Activated naive CD4-positive, alpha-beta T cell treated with anti-CD3 and anti-CD28 coated beads for 36 hours (primary cell): ENCODE measurements at regions of chr7 and their contacts with region 1.

Region 1: DNA sequence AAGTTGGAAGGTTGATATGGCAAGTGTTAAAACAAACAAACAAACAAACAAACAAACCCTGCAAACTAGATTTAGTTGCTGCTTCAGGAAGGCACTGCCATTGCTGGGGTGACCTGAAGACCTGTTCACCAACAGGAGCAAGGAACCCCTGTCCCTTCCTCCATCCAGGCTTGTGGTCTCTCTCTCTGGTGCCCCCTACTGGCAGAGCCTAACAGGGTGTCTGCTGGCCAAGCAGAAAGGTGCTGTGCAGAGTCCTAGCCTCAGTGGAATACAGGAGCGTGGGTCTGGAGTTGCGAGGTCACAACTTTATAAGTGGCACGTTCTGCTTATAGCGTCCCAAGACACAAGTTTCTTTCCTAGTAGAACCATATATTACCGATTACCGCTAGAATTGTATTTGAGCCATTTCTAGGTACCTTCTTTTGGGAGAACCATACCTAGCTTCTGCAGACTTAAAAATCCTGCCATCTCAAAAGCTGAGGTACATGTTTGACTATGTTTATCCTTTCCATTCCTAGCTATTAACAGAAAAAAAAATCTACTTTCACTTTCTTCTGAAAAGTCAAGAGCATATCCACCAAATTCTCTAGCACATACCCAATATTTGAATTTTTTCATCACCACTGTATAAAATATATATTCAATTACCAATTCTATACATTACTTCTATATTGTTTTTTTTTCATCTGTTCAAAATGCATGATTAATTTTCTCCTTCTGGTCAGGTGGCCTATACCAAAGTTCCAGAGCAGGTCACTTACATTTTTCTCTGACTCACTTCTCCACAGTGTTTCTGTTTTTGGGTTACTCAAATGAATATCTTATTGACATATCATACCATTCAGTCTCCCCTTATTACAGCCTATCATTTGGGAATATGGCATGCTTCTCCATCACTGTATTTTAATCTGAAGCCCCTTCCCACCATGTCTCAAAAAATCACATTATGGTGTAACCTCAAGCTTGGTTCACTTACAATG is 29.1 kb upstream of the CALD1 start:
- DNase-seq: peak; percentile 86
- H3K4me3 Mint-ChIP-seq: no peak overlapping the region
- H3K27ac Mint-ChIP-seq: no peak overlapping the region
- H3K4me1 Mint-ChIP-seq: peaks cover 3% of the 10 kb centered on the region
- H3K27me3 Mint-ChIP-seq: no peaks in the 10 kb centered on the region

Region 2: DNA sequence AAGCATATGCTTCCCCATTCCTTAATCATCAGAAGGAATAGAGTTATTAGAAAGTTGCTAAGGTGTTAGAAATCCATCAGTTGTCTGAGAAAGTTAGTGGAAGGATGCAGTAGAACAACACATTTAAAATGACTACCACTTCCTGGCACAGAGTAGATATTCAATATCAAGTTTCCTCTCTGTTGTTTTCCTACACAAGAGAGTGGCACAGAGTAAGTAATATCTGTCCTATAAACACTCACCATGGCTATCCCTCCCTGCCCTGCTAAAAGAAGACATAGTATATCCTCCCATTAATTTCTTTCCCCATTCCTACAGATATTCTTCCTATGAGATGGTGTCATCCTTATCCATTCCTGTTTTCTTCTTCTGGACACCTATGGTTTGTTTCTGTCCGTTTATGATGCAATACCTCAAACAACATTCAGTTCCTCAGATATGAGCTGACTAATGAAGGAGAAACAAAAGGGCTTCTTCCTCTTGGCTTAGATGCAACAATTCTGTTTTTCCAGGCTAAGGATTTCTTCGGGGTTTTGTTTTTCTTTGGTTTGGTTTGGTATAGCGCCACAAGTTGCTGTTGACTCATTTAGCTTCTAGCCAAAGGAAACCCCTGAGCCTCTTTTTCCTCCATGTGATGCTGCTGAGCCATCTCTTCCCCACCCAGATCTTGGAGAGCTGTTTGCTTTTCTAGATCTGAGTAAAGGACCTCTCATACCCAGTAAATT is 136.6 kb before region 1 on chr7:
- CTCF ChIA-PET with region 1: interaction called, 5 read pairs
- intact Hi-C with region 1: loop called (anchors 5 kb)
- DNase-seq: peak; percentile 45
- H3K4me3 Mint-ChIP-seq: no peak overlapping the region
- H3K27ac Mint-ChIP-seq: no peak overlapping the region
- H3K4me1 Mint-ChIP-seq: peaks cover 9% of the 10 kb centered on the region
- H3K27me3 Mint-ChIP-seq: peaks cover 17% of the 10 kb centered on the region

Region 3: GRCh38 chr7:134690016-134690415 is 60.4 kb before region 1 on chr7:
- CTCF ChIA-PET with region 1: interaction called, 18 read pairs
- intact Hi-C with region 1: loop called (anchors 1 kb)
- DNase-seq: peak; percentile 13
- H3K4me3 Mint-ChIP-seq: no peak overlapping the region
- H3K27ac Mint-ChIP-seq: no peak overlapping the region
- H3K4me1 Mint-ChIP-seq: peaks cover 14% of the 10 kb centered on the region
- H3K27me3 Mint-ChIP-seq: no peaks in the 10 kb centered on the region

Region 4: DNA sequence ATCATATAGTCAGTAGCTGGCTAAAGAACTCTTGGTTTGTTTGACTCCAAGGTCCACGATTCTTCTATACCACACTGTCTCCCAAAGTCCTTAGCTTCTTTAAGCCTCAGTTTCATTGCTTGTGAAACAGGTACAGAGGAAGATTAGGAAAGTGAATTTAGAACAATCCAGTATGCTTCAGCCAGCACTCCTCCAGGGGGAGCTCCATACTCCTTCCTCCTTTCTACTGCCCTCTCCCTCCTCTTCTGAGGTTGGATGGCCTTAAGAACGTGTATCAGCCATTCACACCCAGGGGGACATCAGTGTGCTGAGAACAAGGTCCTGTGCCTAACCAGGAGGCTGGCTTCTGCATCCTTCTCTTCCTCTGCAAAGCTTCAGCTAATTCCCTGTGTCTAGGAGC is 25.8 kb before region 1 on chr7:
- CTCF ChIA-PET with region 1: interaction called, 4 read pairs
- intact Hi-C with region 1: loop called (anchors 2 kb)
- DNase-seq: peak; percentile 25
- H3K4me3 Mint-ChIP-seq: no peak overlapping the region
- H3K27ac Mint-ChIP-seq: no peak overlapping the region
- H3K4me1 Mint-ChIP-seq: no peaks in the 10 kb centered on the region
- H3K27me3 Mint-ChIP-seq: no peaks in the 10 kb centered on the region

Region 5: DNA sequence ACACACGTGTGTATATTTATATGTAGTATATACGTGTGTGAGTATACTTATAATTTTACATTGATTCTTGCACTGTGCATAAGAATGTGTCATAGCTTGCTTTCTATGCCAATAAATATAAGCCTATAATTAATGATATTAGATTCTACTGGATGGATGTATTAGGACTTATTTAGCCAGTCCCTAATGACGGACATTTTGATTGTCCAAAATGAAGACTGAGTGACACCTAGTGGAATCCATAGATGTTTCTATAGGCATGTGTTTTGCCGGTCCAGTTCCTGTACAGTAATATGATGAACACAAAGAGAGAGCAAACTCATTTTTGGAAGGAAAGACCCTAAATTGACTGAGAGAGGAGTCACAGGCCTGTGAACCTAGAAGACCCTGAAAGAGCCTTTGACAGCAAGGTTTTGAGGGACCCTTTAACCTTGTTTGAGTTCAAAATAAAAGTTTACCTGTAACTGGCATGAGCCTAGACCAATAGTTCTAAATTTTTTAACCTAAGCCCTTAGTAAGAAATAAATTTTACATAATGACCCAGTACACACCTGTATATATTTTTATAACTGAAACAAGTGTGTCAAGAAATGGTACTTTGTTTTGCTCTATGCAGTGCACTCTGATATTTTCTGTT is 193.5 kb after region 1 on chr7:
- CTCF ChIA-PET with region 1: interaction called, 7 read pairs
- intact Hi-C with region 1: loop called (anchors 2 kb)
- DNase-seq: no peak
- H3K4me3 Mint-ChIP-seq: no peak overlapping the region
- H3K27ac Mint-ChIP-seq: no peak overlapping the region
- H3K4me1 Mint-ChIP-seq: peaks cover 18% of the 10 kb centered on the region
- H3K27me3 Mint-ChIP-seq: no peaks in the 10 kb centered on the region

Region 6: GRCh38 chr7:134954197-134955082 is 204.1 kb after region 1 on chr7:
- CTCF ChIA-PET with region 1: interaction called, 6 read pairs
- intact Hi-C with region 1: loop called (anchors 1 kb)
- DNase-seq: no peak
- H3K4me3 Mint-ChIP-seq: no peak overlapping the region
- H3K27ac Mint-ChIP-seq: no peak overlapping the region
- H3K4me1 Mint-ChIP-seq: no peaks in the 10 kb centered on the region
- H3K27me3 Mint-ChIP-seq: no peaks in the 10 kb centered on the region